ENCODE measurements at regions of chr4 and their contacts with region 1.

Region 1: DNA sequence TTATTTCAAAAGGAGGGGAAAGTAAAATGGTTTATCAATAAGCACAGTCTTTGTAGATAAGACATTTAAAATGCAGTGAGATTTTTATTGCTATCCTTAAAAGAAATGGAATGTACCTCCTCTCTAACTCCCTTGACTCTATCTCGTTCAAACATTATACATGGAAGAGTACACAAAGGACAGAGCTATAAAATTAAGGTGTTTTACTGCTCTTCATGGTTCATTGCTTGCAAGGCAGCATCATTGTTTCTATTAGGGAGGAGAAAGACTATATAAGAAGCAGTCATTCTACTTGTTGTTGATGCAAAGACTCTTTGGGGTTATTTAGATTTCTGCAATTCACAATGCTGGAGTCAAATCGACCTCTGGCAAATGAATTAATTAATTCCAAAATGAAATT is 380.2 kb upstream of the NDST3 start:
- DNase-seq: no peak
- ATAC-seq: no peak
- H3K4me3 Mint-ChIP-seq: no peak overlapping the region
- H3K27ac Mint-ChIP-seq: no peak overlapping the region
- H3K4me1 Mint-ChIP-seq: no peaks in the 10 kb centered on the region
- H3K27me3 Mint-ChIP-seq: no peaks in the 10 kb centered on the region
- CTCF ChIP-seq: no peak

Region 2: DNA sequence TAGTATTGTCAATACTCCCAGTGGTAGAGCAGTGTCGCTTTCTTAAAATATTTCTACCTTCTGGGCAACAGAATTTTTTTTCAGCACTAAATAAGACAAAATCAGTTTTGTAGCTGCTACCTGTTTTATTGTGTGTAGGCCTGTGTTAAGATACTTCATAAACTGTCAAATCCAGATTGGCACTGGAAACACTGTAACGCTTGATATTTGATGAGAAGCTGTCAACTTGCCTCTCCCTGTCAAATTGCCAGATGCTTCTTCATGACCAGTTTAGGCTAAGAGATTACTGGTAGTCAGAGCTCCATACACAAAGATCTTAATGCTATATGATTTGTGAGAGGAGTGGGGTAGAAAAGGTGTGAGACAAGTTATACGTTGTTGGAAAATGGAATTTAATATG is 586.0 kb before region 1 on chr4:
- CTCF ChIA-PET with region 1: no interaction called
- POLR2A ChIA-PET with region 1: no interaction called
- intact Hi-C with region 1: no loop called
- DNase-seq: no peak
- ATAC-seq: no peak
- H3K4me3 Mint-ChIP-seq: no peak overlapping the region
- H3K27ac Mint-ChIP-seq: no peak overlapping the region
- H3K4me1 Mint-ChIP-seq: no peaks in the 10 kb centered on the region
- H3K27me3 Mint-ChIP-seq: no peaks in the 10 kb centered on the region
- CTCF ChIP-seq: no peak

Region 3: DNA sequence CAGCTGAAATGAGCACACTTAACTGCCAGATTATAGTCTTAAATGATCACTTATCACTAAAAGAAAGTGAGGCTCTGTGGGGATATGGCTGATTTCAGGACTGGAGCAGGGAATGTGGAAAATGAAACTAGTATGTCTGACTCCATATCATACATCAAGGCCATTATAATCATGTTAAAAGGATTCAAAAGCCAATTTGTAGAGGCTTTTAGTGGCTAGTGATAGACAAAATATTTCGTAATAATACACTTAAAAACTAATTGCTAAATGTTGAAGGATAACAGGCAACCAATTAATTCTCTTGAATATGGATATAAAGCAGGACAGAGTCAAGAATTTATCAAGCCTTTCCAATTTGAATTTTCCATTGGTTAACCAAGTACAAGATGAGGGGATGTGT is 22.1 kb after region 1 on chr4:
- CTCF ChIA-PET with region 1: no interaction called
- POLR2A ChIA-PET with region 1: no interaction called
- intact Hi-C with region 1: loop called (anchors 1 kb)
- DNase-seq: no peak
- ATAC-seq: no peak
- H3K4me3 Mint-ChIP-seq: no peak overlapping the region
- H3K27ac Mint-ChIP-seq: no peak overlapping the region
- H3K4me1 Mint-ChIP-seq: no peaks in the 10 kb centered on the region
- H3K27me3 Mint-ChIP-seq: no peaks in the 10 kb centered on the region
- CTCF ChIP-seq: no peak

Measured in activated B cell treated with CpG ODN at 0.5 μM for 24 hours (primary cell).